CD8-positive, alpha-beta T cell (primary cell): ENCODE measurements at regions of chr2 and their contacts with region 1.

Region 1: DNA sequence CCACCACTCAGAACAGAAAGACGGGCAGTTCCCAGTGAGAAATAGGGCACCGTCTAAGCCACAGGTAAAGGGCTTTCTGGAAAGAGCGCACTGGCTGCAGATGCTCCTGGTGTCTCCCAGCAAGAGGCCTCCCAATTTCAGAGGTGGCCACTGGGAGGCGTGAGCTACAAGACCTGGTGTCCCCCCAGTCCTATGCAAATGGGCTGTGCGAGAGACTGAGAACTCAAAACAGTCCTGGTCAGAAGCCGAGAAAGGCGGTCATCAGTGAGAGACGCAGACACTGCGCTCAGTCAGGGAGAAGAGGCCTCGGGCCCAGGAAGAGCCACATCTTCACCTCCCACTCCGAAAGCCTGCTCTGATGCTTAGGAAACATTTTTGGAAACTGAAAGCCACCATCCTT is 179.5 kb downstream of the EIPR1 start:
- DNase-seq: peak in 2 of 9 experiments; percentile 18 to 25
- ATAC-seq: no peak
- H3K4me3 ChIP-seq: no peak overlapping the region
- H3K4me3 Mint-ChIP-seq: no peak overlapping the region
- H3K27ac ChIP-seq: no peak overlapping the region
- H3K27ac Mint-ChIP-seq: no peak overlapping the region
- H3K4me1 ChIP-seq: no peaks in the 10 kb centered on the region
- H3K4me1 Mint-ChIP-seq: no peaks in the 10 kb centered on the region
- H3K27me3 ChIP-seq: no peaks in the 10 kb centered on the region
- H3K27me3 Mint-ChIP-seq: no peaks in the 10 kb centered on the region
- CTCF ChIP-seq: no peak

Region 2: DNA sequence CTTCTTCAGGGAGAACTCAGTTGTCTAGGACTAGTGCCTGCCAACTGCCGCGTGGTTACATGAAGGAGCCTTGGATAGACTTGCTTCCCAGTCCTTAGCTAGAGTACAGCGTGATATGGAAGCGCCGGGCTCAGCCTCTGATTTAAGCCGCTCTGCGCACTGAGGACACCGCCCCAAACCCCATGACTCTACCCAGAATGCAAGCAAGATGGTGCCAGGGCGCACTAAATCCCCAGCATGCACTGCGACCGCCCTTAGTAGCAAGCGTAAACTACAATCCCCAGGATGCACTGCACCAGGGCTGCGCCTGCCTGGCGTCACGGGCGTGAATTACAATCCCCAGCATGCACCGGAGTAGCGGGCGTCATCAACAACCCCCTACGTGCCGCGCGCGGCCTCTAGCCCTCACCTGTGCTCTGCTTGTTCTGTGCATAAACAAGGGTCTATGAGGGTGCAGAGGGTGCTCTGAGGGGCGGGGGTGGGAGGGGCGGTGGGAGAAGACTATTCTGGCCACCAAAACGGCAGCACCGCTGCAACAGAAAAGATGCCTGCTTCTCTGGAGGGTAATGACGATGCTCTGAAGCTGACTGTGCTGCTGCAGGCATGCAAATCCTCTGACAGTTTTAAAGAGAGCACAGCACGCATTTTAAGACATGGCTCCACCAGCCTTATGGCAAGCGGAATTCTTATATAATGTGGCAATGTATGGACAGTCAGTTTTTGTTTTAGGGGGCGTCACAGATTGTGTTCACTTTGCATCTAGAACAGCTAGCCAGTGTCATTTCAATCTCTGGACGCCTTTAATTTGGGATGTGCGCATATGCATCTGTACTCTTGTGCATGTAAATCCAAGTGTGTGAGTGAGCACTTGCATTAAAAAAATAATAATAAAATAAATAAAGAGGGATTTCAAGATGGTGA is 584.6 kb before region 1 on chr2:
- CTCF ChIA-PET with region 1: no interaction called
- POLR2A ChIA-PET with region 1: no interaction called
- intact Hi-C with region 1: no loop called
- DNase-seq: peak; percentile 66 to 93 (median 86)
- ATAC-seq: peak; percentile 99
- H3K4me3 ChIP-seq: peak overlapping the region; percentile 38 to 61
- H3K4me3 Mint-ChIP-seq: peak overlapping the region; percentile 82
- H3K27ac ChIP-seq: peak overlapping the region; percentile 25 to 80
- H3K27ac Mint-ChIP-seq: peak overlapping the region; percentile 91
- H3K4me1 ChIP-seq: peaks cover 7% of the 10 kb centered on the region
- H3K4me1 Mint-ChIP-seq: peaks cover 8% of the 10 kb centered on the region
- H3K27me3 ChIP-seq: no peaks in the 10 kb centered on the region
- H3K27me3 Mint-ChIP-seq: peaks cover 9% of the 10 kb centered on the region
- CTCF ChIP-seq: no peak

Region 3: DNA sequence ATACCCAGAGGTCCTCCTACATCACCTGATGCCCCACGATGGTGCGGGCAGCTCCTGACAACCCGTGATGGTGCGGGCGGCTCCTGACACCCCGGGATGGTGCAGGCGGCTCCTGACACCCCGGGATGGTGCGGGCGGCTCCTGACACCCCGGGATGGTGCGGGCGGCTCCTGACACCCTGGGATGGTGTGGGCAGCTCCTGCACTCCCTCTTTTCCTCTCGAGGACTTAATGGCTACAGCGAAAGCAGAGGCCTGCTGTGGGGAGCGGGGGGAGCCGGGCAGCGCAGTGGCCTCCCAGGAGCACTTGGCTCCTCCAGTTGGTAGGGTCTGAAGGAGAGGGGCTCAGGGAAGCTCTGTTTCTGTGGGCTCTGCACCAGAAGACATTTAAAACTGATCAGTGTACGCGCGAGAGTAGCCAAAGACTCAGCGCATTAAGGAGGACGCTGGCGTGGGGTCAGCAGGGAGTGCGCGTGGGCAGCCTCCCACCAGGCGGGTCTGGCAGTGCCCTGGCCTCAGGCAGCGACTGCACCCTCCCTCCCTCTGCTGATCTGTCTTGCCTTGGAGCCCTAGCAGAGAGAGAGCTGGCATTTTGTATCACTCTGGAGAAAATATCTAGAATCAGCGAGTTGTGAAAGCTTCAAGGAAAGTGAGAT is 402.6 kb before region 1 on chr2:
- CTCF ChIA-PET with region 1: no interaction called
- POLR2A ChIA-PET with region 1: no interaction called
- intact Hi-C with region 1: no loop called
- DNase-seq: no peak
- ATAC-seq: no peak
- H3K4me3 ChIP-seq: no peak overlapping the region
- H3K4me3 Mint-ChIP-seq: no peak overlapping the region
- H3K27ac ChIP-seq: no peak overlapping the region
- H3K27ac Mint-ChIP-seq: no peak overlapping the region
- H3K4me1 ChIP-seq: no peaks in the 10 kb centered on the region
- H3K4me1 Mint-ChIP-seq: no peaks in the 10 kb centered on the region
- H3K27me3 ChIP-seq: no peaks in the 10 kb centered on the region
- H3K27me3 Mint-ChIP-seq: peaks cover 13% of the 10 kb centered on the region
- CTCF ChIP-seq: no peak

Region 4: DNA sequence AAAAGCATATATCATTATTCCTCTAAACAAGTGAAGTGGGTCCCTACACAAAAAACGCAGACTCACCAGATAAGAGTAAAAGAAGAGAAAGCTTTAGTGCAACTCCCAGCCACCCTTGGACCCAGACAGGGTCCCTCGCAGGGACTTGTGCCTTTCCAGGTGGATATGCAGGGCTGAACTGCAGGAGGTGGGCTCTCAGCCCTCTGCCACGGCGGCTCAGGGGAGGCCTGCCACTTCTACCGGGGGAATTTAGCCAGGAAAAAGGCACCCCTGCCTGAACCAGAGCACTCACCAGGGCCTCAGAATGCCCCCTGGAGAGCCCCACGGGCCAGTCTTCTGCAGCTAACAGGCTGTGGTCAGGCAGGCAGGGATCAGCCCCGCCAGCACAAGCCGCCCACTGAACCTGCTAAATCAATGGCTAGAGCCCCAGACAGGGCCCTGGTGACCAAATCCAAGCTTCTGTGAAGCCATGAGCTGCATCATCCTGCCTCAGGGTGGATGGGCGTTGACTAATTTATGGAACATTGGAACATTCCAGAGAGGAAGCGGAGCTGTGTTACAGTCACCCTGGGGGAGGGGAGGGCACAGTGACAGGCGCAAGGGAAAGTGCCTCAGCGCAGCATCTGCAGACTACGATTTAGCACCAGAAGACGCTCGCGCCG is 29.8 kb before region 1 on chr2:
- CTCF ChIA-PET with region 1: no interaction called
- POLR2A ChIA-PET with region 1: no interaction called
- intact Hi-C with region 1: no loop called
- DNase-seq: no peak
- ATAC-seq: no peak
- H3K4me3 ChIP-seq: no peak overlapping the region
- H3K4me3 Mint-ChIP-seq: no peak overlapping the region
- H3K27ac ChIP-seq: no peak overlapping the region
- H3K27ac Mint-ChIP-seq: no peak overlapping the region
- H3K4me1 ChIP-seq: no peaks in the 10 kb centered on the region
- H3K4me1 Mint-ChIP-seq: no peaks in the 10 kb centered on the region
- H3K27me3 ChIP-seq: no peaks in the 10 kb centered on the region
- H3K27me3 Mint-ChIP-seq: no peaks in the 10 kb centered on the region
- CTCF ChIP-seq: no peak

Region 5: DNA sequence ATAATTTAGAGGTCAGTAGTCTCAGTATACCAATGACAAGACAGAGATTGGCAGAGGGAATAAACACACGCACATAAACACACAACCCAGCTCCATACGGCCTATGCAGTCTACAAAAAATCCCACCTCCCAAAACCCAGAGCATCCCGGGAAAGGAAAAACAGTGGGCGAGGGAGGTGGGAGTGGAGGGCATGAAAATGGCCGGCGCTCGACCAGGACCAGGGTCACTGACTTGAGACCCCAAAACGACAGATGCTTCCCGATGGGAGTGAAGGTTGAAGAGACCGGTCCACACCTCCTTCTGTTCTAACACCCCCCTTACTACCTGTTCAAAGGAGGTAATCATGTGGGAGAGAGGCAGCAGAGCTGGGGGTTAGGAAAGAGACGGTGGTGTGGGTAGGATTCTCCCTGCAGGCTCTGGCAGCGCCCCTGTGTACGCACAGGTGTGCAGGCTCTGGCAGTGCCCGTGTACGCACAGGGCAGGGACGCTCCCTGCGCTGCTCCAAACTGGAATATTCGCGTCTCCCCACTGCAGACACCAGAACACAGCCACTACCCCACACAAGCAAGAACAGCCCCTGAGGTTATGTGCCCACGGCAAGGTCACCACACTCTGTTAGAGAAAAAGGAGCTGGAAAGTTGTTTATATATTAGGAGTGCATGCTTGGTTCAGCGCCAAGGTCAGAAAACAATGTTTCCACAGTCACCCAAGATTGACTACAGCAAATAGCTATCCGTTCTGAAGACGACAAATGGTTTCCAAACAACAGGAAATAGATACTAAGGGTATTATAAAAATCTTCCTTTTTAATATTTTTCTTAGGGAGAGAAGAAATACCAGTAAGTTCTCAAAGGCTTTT is 111.6 kb after region 1 on chr2:
- CTCF ChIA-PET with region 1: no interaction called
- POLR2A ChIA-PET with region 1: no interaction called
- intact Hi-C with region 1: loop called in 1 of 2 experiments (anchors 5 kb)
- DNase-seq: no peak
- ATAC-seq: no peak
- H3K4me3 ChIP-seq: no peak overlapping the region
- H3K4me3 Mint-ChIP-seq: no peak overlapping the region
- H3K27ac ChIP-seq: no peak overlapping the region
- H3K27ac Mint-ChIP-seq: no peak overlapping the region
- H3K4me1 ChIP-seq: no peaks in the 10 kb centered on the region
- H3K4me1 Mint-ChIP-seq: peaks cover 24% of the 10 kb centered on the region
- H3K27me3 ChIP-seq: no peaks in the 10 kb centered on the region
- H3K27me3 Mint-ChIP-seq: no peaks in the 10 kb centered on the region
- CTCF ChIP-seq: no peak

Region 6: DNA sequence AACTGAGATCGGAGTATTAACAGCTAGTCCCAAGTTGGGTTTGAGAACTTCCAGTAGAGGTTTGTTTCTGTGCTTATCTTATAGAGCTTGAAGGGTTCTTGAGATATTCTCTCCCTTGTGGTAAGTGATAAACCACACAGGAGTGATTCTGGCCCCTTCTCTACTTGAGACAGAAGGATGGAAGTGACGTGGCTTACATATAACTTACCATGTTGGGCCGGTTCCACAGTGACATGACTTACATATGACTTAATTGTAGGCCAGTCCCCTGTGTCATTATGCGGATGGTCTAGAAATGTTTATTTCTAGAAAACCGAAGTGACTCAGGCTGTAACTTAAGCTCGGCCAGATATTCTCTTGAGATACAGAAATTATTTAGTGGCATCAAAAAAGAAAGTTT is 244.1 kb after region 1 on chr2:
- CTCF ChIA-PET with region 1: no interaction called
- POLR2A ChIA-PET with region 1: no interaction called
- intact Hi-C with region 1: no loop called
- DNase-seq: no peak
- ATAC-seq: no peak
- H3K4me3 ChIP-seq: no peak overlapping the region
- H3K4me3 Mint-ChIP-seq: no peak overlapping the region
- H3K27ac ChIP-seq: no peak overlapping the region
- H3K27ac Mint-ChIP-seq: no peak overlapping the region
- H3K4me1 ChIP-seq: no peaks in the 10 kb centered on the region
- H3K4me1 Mint-ChIP-seq: peaks cover 20% of the 10 kb centered on the region
- H3K27me3 ChIP-seq: no peaks in the 10 kb centered on the region
- H3K27me3 Mint-ChIP-seq: no peaks in the 10 kb centered on the region
- CTCF ChIP-seq: no peak